Naive thymus-derived CD4-positive, alpha-beta T cell (primary cell): ENCODE measurements at regions of chr13 and their contacts with region 1.

Region 1: GRCh38 chr13:39037880-39038568 is at the starts of genes NHLRC3 and PROSER1:
- DNase-seq: peak; percentile 60 to 86 (median 78)
- ATAC-seq: peak; percentile 87
- H3K4me3 ChIP-seq: peak within 1 kb of the TSS; percentile 95
- H3K4me3 Mint-ChIP-seq: peak within 1 kb of the TSS; percentile 92 to 99 (median 96)
- H3K27ac ChIP-seq: peak within 1 kb of the TSS; percentile 82
- H3K27ac Mint-ChIP-seq: peak within 1 kb of the TSS; percentile 92 to 97 (median 95)
- H3K4me1 ChIP-seq: peaks cover 7 to 28% of the 10 kb centered on the region in 2 donors
- H3K4me1 Mint-ChIP-seq: peaks cover 36 to 78% (median 65%) of the 10 kb centered on the region in 7 donors
- H3K27me3 ChIP-seq: no peaks in the 10 kb centered on the region
- H3K27me3 Mint-ChIP-seq: no peaks in the 10 kb centered on the region
- total RNA-seq, gene NHLRC3: 13.0 to 30.6 (median 23.6) TPM
- total RNA-seq, gene PROSER1: 36.1 to 65.7 (median 47.3) TPM

Region 2: GRCh38 chr13:37058910-37059847 is 1978.8 kb before region 1 on chr13 and contains the start of gene SUPT20H:
- CTCF ChIA-PET with region 1: no interaction called
- POLR2A ChIA-PET with region 1: interaction called, 6 read pairs
- intact Hi-C with region 1: loop called (anchors 1 kb)
- DNase-seq: peak; percentile 85 to 94 (median 91)
- ATAC-seq: peak; percentile 98
- H3K4me3 ChIP-seq: peak within 1 kb of the TSS; percentile 77
- H3K4me3 Mint-ChIP-seq: peak within 1 kb of the TSS; percentile 87 to 99 (median 94)
- H3K27ac ChIP-seq: peak within 1 kb of the TSS; percentile 93
- H3K27ac Mint-ChIP-seq: peak within 1 kb of the TSS; percentile 93 to 99 (median 98)
- H3K4me1 ChIP-seq: peaks cover 13 to 15% of the 10 kb centered on the region in 2 donors
- H3K4me1 Mint-ChIP-seq: peaks cover 13 to 59% (median 50%) of the 10 kb centered on the region in 7 donors
- H3K27me3 ChIP-seq: no peaks in the 10 kb centered on the region
- H3K27me3 Mint-ChIP-seq: peaks cover 0 to 10% (median 0%) of the 10 kb centered on the region in 5 donors
- total RNA-seq, gene SUPT20H: 70.5 to 106 (median 86.1) TPM

Region 3: DNA sequence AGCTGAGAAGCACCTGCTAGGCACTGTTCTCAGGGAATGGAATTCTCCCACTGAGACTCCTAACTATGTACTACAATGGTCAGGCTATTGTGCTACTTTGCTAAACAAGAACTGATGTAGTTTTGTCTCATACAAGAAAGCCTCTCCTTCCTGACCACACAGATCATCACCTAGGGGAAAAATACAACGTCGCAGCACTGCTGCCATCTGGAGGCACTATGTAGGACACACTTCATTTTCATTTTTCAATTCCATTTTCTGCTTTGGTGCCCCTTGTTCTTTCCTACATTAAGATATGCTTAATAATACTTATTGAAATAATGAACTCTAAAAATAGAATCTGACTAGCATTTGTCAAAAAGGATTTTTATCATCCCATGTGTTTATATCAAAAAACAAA is 21.2 kb before region 1 on chr13:
- CTCF ChIA-PET with region 1: interaction called, 3 read pairs
- POLR2A ChIA-PET with region 1: interaction called, 4 read pairs
- intact Hi-C with region 1: loop called in 1 of 2 experiments (anchors 2 kb)
- DNase-seq: peak in 1 of 9 donors; percentile 4
- ATAC-seq: peak; percentile 63
- H3K4me3 ChIP-seq: no peak overlapping the region
- H3K4me3 Mint-ChIP-seq: no peak overlapping the region
- H3K27ac ChIP-seq: no peak overlapping the region
- H3K27ac Mint-ChIP-seq: peak overlapping the region in 2 of 9 donors; percentile 31 to 47
- H3K4me1 ChIP-seq: no peaks in the 10 kb centered on the region
- H3K4me1 Mint-ChIP-seq: peaks cover 0 to 16% (median 4%) of the 10 kb centered on the region in 7 donors
- H3K27me3 ChIP-seq: no peaks in the 10 kb centered on the region
- H3K27me3 Mint-ChIP-seq: no peaks in the 10 kb centered on the region

Region 4: DNA sequence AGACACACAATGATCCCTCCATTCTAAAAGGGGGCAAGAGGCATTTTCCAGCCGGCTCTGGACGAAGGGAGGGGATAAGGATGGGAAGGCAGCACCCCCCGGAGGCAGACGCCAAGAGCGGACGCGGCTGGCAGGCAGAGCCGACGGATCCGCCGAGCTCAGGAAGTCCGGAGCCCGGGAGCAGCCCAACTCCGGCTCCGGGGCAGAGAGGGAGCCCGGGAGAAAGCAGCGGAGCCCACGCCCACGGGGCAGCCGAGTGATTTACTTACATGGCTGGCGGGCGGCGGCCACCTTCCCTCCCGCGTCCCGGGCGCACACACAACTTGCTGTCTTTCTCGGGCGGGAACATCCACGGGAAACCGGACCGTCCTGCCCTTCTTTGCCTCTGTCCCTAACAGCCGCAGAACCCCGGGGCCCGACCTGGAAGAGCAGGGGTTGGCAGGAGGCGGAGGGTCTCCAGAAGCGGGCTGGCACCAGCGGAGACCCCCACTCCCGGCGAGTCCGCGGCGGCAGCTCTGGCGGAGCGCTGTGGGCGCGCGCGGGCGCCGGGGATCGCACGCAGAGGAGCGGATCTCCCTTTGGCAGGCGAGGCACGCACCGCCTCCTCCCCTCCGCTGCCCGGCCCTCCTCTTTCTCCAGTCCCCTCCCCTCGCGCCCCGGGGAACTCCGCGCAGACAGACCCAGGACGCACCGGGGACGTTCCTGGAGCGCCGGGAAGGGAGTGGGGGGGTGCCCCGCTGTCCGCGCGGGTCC is 564.8 kb after region 1 on chr13 and contains the start of gene LHFPL6:
- CTCF ChIA-PET with region 1: no interaction called
- POLR2A ChIA-PET with region 1: no interaction called
- intact Hi-C with region 1: loop called in 1 of 2 experiments (anchors 2 kb)
- DNase-seq: peak in 8 of 9 donors; percentile 4 to 80 (median 22)
- ATAC-seq: peak; percentile 84
- H3K4me3 ChIP-seq: peak within 1 kb of the TSS; percentile 44
- H3K4me3 Mint-ChIP-seq: peak within 1 kb of the TSS; percentile 60 to 84 (median 76)
- H3K27ac ChIP-seq: no peak within 1 kb of the TSS
- H3K27ac Mint-ChIP-seq: peak within 1 kb of the TSS in 2 of 9 donors; percentile 20 to 46
- H3K4me1 ChIP-seq: peaks cover 0 to 6% of the 10 kb centered on the region in 2 donors
- H3K4me1 Mint-ChIP-seq: peaks cover 6 to 15% (median 12%) of the 10 kb centered on the region in 7 donors
- H3K27me3 ChIP-seq: peaks cover 7 to 14% of the 10 kb centered on the region in 2 donors
- H3K27me3 Mint-ChIP-seq: peaks cover 36 to 61% (median 53%) of the 10 kb centered on the region in 5 donors
- total RNA-seq, gene LHFPL6: 0.92 TPM in 1 of 5 experiments, not detected in the others

Region 5: DNA sequence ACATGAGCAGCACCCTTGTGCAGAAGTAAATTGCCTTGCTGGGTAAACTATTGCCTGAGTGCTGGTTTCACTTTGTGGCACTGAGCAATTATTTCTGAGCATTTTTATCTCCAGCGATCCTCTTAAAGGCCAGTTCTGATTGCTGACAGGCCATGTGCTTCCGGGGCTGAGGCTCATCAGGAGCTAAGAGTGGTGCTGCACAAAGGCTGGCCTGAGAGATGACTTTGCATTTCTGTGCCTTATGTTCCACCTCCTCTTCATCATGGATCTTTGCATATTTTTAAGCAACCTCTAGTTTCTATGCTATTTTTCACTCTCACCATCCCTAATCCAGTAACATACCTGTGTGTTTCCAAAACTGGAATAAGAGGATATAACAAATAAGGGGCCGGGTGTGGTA is 599.9 kb after region 1 on chr13:
- CTCF ChIA-PET with region 1: no interaction called
- POLR2A ChIA-PET with region 1: no interaction called
- intact Hi-C with region 1: no loop called
- DNase-seq: no peak
- ATAC-seq: no peak
- H3K4me3 ChIP-seq: no peak overlapping the region
- H3K4me3 Mint-ChIP-seq: no peak overlapping the region
- H3K27ac ChIP-seq: no peak overlapping the region
- H3K27ac Mint-ChIP-seq: no peak overlapping the region
- H3K4me1 ChIP-seq: no peaks in the 10 kb centered on the region
- H3K4me1 Mint-ChIP-seq: no peaks in the 10 kb centered on the region
- H3K27me3 ChIP-seq: peaks cover 0 to 3% of the 10 kb centered on the region in 2 donors
- H3K27me3 Mint-ChIP-seq: peaks cover 26 to 38% (median 30%) of the 10 kb centered on the region in 5 donors

Region 6: GRCh38 chr13:39676315-39676876 is 638.4 kb after region 1 on chr13:
- CTCF ChIA-PET with region 1: no interaction called
- POLR2A ChIA-PET with region 1: no interaction called
- intact Hi-C with region 1: loop called in 1 of 2 experiments (anchors 5 kb)
- DNase-seq: peak in 7 of 9 donors; percentile 24 to 60 (median 37)
- ATAC-seq: no peak
- H3K4me3 ChIP-seq: no peak overlapping the region
- H3K4me3 Mint-ChIP-seq: no peak overlapping the region
- H3K27ac ChIP-seq: no peak overlapping the region
- H3K27ac Mint-ChIP-seq: peak overlapping the region in 1 of 9 donors; percentile 23
- H3K4me1 ChIP-seq: no peaks in the 10 kb centered on the region
- H3K4me1 Mint-ChIP-seq: peaks cover 0 to 3% (median 0%) of the 10 kb centered on the region in 7 donors
- H3K27me3 ChIP-seq: no peaks in the 10 kb centered on the region
- H3K27me3 Mint-ChIP-seq: no peaks in the 10 kb centered on the region